ENCODE measurements at regions of chr5 and their contacts with region 1.

Region 1: GRCh38 chr5:56270568-56271392 is 37.6 kb upstream of the ANKRD55 start:
- ATAC-seq: peak; percentile 98 to 100 (median 100)
- H3K4me3 ChIP-seq: no peak overlapping the region
- H3K27ac ChIP-seq: no peak overlapping the region
- H3K4me1 ChIP-seq: no peaks in the 10 kb centered on the region

Region 2: GRCh38 chr5:56375011-56375410 is 104.2 kb after region 1 on chr5:
- in situ Hi-C with region 1: no loop called
- ATAC-seq: no peak
- H3K4me3 ChIP-seq: no peak overlapping the region
- H3K27ac ChIP-seq: no peak overlapping the region
- H3K4me1 ChIP-seq: no peaks in the 10 kb centered on the region

Region 3: DNA sequence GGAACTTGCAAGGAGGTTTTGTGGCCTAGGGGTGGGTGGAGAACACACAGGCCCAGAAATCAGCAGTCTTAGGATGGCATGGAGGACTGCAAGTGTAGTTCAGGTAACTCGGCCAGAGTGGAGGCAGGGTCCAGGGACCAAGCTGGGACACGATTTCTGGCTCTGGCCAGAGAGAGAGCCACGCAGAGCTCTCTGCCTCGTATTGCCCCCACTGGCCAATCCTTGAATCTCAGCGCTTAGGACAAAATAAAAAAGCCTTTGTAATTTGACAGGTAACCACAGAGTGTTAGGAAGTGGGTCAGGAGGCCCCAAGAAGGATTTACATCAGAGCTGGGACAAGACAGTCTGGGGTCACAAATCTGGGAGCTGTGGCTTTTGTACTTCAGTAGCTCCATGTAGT is 556.3 kb after region 1 on chr5:
- in situ Hi-C with region 1: loop called in 6 of 9 experiments (anchors 10 to 25 kb)
- ATAC-seq: peak in 1 of 8 experiments; percentile 72
- H3K4me3 ChIP-seq: no peak overlapping the region
- H3K27ac ChIP-seq: no peak overlapping the region
- H3K4me1 ChIP-seq: peaks cover 2 to 5% of the 10 kb centered on the region in 2 donors

Region 4: GRCh38 chr5:56838409-56839039 is 567.7 kb after region 1 on chr5:
- in situ Hi-C with region 1: loop called in 5 of 9 experiments (anchors 10 to 25 kb)
- ATAC-seq: peak in 7 of 8 experiments; percentile 48 to 88 (median 68)
- H3K4me3 ChIP-seq: no peak overlapping the region
- H3K27ac ChIP-seq: no peak overlapping the region
- H3K4me1 ChIP-seq: peaks cover 10 to 12% of the 10 kb centered on the region in 2 donors